B cell (primary cell): ENCODE measurements at regions of chr14 and their contacts with region 1.

Region 1: DNA sequence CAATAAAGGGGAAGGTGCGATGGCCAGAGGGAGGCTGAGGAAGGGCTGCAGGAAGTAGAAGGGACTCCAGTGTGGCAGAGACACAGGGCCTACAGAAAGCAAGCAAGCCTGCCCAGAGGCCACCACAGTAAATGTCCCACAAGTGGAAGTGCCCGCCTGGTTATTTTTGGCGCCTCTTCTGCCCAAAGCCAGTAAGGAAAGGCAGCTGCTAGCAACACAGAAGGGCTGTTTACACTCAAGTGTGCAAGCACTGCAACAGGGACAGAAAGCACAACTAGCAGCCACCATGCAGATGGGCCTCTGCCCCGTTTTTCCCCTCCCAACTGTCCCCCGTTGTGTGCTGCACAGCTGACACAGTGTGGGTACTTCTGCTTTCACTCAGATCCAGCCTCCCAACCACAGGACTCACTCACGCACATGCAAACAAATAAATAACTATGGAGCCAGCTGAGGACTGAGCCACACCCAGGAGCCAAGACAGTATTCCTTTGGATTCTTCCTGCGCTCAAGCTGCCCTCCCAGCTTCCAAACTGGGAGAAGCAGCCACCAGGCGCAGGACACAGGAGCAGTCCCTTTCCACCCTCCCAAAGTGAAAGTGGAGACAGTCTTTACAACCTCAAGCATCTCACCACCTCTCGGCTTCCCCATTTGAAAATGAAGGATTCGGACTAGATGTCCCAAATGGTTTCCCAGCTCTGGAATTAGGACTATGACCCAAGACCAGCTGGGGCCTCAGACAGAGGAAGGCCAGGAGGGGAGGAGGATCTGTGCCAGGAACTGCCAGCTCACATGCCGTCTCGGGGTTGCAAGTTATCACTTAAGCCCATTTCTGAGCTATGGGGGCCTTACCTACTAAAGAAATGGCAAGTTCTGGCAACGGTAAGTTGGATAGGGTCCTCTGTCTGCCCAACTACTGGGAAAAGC is 40.0 kb upstream of the PNMA1 start:
- DNase-seq: peak; percentile 89
- ATAC-seq: peak; percentile 56
- H3K4me3 ChIP-seq: peak overlapping the region; percentile 36 to 68 (median 48)
- H3K4me3 Mint-ChIP-seq: peak overlapping the region; percentile 88
- H3K27ac ChIP-seq: peak overlapping the region; percentile 86 to 90
- H3K27ac Mint-ChIP-seq: peak overlapping the region; percentile 94
- H3K4me1 ChIP-seq: peaks cover 86 to 94% of the 10 kb centered on the region in 2 donors
- H3K4me1 Mint-ChIP-seq: peaks cover 93% of the 10 kb centered on the region
- H3K27me3 ChIP-seq: no peaks in the 10 kb centered on the region
- H3K27me3 Mint-ChIP-seq: no peaks in the 10 kb centered on the region
- CTCF ChIP-seq: no peak

Region 2: DNA sequence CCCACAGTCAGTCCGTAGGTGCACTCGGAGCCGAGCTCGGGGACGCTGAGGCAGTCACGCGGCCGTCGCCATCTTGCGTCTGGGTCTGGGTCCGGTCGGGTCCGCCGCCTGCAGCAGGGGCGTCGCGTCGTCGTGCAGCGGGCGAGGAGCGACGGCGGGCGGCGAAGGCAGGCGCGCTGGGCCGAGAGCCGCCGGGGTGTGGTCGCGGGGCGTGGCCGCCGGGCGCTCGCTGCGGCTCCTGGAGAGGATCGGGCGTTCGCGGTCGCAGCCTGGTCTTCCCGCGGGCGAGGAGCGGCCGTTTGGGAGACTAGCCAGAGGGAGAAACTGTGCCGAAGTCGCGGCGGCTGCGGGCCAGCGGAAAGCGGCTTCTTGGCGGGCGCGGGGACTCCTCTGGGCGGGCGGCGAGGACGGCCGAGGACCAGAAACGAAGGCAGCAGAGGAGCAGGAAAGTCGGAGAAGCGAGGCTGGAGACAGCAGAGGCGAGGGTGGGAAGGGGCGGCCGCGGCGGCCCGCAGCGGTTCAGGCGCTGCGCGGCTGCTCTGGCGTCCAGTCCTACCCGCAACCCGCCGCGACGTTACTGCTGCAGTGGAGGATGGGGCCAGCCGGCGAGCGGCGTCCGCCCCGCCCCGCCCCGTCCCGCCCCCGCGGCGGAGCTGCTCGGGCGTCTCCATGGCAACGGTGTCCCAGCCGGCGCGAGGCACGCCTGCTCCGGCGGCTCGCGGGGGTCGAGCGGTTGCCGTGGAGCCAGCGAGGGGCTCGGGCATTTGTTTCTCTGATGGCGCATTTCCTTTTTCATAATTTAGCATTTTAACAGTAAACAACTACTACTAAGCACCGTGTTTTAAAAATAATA is 40.2 kb before region 1 on chr14 and contains the start of gene PNMA1:
- CTCF ChIA-PET with region 1: no interaction called
- POLR2A ChIA-PET with region 1: interaction called, 4 read pairs
- intact Hi-C with region 1: loop called (anchors 5 kb)
- DNase-seq: peak; percentile 92
- ATAC-seq: peak; percentile 81
- H3K4me3 ChIP-seq: peak within 1 kb of the TSS; percentile 54 to 85 (median 77)
- H3K4me3 Mint-ChIP-seq: peak within 1 kb of the TSS; percentile 92
- H3K27ac ChIP-seq: peak within 1 kb of the TSS; percentile 39 to 81
- H3K27ac Mint-ChIP-seq: peak within 1 kb of the TSS; percentile 98
- H3K4me1 ChIP-seq: peaks cover 17 to 22% of the 10 kb centered on the region in 2 donors
- H3K4me1 Mint-ChIP-seq: peaks cover 21% of the 10 kb centered on the region
- H3K27me3 ChIP-seq: no peaks in the 10 kb centered on the region
- H3K27me3 Mint-ChIP-seq: no peaks in the 10 kb centered on the region
- CTCF ChIP-seq: no peak
- total RNA-seq, gene PNMA1: 29.6 and 31.6 TPM in 2 replicates

Region 3: DNA sequence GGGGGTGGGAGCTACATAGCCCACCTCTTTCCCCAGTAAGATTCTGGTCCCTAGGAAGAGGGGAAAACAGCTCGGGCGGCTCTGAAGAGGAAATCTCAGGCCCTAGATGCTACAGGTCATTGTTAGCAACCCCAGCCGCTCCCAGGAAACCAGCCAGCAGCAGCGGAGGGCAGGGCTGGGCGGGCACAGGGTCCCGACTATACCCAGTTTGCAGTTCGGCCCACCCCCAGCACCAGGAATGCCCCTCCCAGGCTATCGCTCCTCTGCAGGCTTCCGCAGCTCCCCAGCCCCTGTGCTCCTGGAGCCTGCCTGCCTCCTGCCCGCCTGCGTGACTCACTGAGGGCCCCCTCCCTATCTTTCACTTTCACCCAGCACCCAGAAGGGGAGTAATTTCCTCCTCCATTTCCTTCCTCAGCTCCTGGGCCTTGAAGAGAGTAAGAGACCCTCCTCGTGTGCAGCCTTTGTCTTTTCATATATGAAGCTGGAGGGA is 12.8 kb before region 1 on chr14:
- CTCF ChIA-PET with region 1: interaction called, 107 read pairs
- POLR2A ChIA-PET with region 1: interaction called, 10 read pairs
- intact Hi-C with region 1: loop called (anchors 1 kb)
- DNase-seq: peak; percentile 73
- ATAC-seq: peak; percentile 77
- H3K4me3 ChIP-seq: peak overlapping the region; percentile 10 to 55 (median 43)
- H3K4me3 Mint-ChIP-seq: peak overlapping the region; percentile 94
- H3K27ac ChIP-seq: peak overlapping the region; percentile 61 to 81
- H3K27ac Mint-ChIP-seq: peak overlapping the region; percentile 99
- H3K4me1 ChIP-seq: peaks cover 63 to 71% of the 10 kb centered on the region in 2 donors
- H3K4me1 Mint-ChIP-seq: peaks cover 74% of the 10 kb centered on the region
- H3K27me3 ChIP-seq: no peaks in the 10 kb centered on the region
- H3K27me3 Mint-ChIP-seq: no peaks in the 10 kb centered on the region
- CTCF ChIP-seq: no peak

Region 4: DNA sequence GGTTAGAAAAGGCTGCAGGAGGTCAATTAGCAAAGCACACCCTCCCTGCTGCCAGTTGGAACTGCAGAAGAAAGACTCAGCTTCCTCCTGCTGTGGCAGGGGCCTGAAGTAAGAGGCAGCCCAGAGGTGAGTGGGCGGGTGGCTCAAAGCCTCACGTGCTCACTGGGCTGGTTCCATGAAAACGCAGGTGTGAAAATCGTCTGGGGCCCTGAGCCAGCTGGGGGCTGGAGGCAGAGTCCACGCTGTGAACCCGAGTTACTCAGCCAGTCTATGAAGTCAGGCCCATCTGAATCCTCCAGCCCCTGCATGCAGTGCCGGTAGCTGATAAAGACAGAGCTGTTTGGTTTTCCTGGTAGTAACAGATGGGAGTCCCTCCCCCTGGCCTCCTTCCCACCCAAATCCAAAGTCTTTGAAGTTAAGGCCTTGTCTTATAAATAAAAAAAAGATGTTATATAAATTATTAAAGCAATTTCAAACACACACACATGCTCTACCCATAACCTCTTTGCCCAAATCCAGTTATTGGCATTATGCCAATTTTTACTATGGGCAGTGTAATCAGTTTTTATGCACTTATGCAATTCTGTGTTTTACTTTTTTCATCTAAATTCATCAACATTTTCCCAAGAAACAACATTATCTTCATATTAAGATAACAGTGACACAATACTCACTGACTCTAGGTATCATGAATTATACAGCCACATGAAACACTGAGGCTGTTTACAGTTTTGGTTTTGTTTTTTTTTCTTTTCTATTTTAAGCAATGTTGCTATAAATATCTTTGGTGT is 17.8 kb after region 1 on chr14:
- CTCF ChIA-PET with region 1: interaction called, 220 read pairs
- POLR2A ChIA-PET with region 1: interaction called, 183 read pairs
- intact Hi-C with region 1: loop called (anchors 1 kb)
- DNase-seq: peak; percentile 89
- ATAC-seq: peak; percentile 61
- H3K4me3 ChIP-seq: peak overlapping the region in 3 of 5 experiments; percentile 5 to 52 (median 10)
- H3K4me3 Mint-ChIP-seq: peak overlapping the region; percentile 87
- H3K27ac ChIP-seq: peak overlapping the region; percentile 96 to 97
- H3K27ac Mint-ChIP-seq: peak overlapping the region; percentile 99
- H3K4me1 ChIP-seq: peaks cover 83 to 96% of the 10 kb centered on the region in 2 donors
- H3K4me1 Mint-ChIP-seq: peaks cover 76% of the 10 kb centered on the region
- H3K27me3 ChIP-seq: no peaks in the 10 kb centered on the region
- H3K27me3 Mint-ChIP-seq: no peaks in the 10 kb centered on the region
- CTCF ChIP-seq: no peak

Region 5: GRCh38 chr14:73777401-73777800 is 23.2 kb after region 1 on chr14:
- CTCF ChIA-PET with region 1: interaction called, 220 read pairs
- POLR2A ChIA-PET with region 1: interaction called, 183 read pairs
- intact Hi-C with region 1: loop called (anchors 1 kb)
- DNase-seq: peak; percentile 67
- ATAC-seq: peak; percentile 84
- H3K4me3 ChIP-seq: no peak overlapping the region
- H3K4me3 Mint-ChIP-seq: peak overlapping the region; percentile 18
- H3K27ac ChIP-seq: peak overlapping the region in 1 of 2 donors; percentile 35
- H3K27ac Mint-ChIP-seq: peak overlapping the region; percentile 80
- H3K4me1 ChIP-seq: peaks cover 60 to 67% of the 10 kb centered on the region in 2 donors
- H3K4me1 Mint-ChIP-seq: peaks cover 65% of the 10 kb centered on the region
- H3K27me3 ChIP-seq: no peaks in the 10 kb centered on the region
- H3K27me3 Mint-ChIP-seq: no peaks in the 10 kb centered on the region
- CTCF ChIP-seq: peak; percentile 47

Region 6: GRCh38 chr14:73825551-73826188 is 71.4 kb after region 1 on chr14:
- CTCF ChIA-PET with region 1: interaction called, 51 read pairs
- POLR2A ChIA-PET with region 1: interaction called, 3 read pairs
- intact Hi-C with region 1: no loop called
- DNase-seq: peak; percentile 81
- ATAC-seq: peak; percentile 99
- H3K4me3 ChIP-seq: no peak overlapping the region
- H3K4me3 Mint-ChIP-seq: no peak overlapping the region
- H3K27ac ChIP-seq: no peak overlapping the region
- H3K27ac Mint-ChIP-seq: no peak overlapping the region
- H3K4me1 ChIP-seq: no peaks in the 10 kb centered on the region
- H3K4me1 Mint-ChIP-seq: peaks cover 4% of the 10 kb centered on the region
- H3K27me3 ChIP-seq: no peaks in the 10 kb centered on the region
- H3K27me3 Mint-ChIP-seq: no peaks in the 10 kb centered on the region
- CTCF ChIP-seq: peak; percentile 93

Region 7: DNA sequence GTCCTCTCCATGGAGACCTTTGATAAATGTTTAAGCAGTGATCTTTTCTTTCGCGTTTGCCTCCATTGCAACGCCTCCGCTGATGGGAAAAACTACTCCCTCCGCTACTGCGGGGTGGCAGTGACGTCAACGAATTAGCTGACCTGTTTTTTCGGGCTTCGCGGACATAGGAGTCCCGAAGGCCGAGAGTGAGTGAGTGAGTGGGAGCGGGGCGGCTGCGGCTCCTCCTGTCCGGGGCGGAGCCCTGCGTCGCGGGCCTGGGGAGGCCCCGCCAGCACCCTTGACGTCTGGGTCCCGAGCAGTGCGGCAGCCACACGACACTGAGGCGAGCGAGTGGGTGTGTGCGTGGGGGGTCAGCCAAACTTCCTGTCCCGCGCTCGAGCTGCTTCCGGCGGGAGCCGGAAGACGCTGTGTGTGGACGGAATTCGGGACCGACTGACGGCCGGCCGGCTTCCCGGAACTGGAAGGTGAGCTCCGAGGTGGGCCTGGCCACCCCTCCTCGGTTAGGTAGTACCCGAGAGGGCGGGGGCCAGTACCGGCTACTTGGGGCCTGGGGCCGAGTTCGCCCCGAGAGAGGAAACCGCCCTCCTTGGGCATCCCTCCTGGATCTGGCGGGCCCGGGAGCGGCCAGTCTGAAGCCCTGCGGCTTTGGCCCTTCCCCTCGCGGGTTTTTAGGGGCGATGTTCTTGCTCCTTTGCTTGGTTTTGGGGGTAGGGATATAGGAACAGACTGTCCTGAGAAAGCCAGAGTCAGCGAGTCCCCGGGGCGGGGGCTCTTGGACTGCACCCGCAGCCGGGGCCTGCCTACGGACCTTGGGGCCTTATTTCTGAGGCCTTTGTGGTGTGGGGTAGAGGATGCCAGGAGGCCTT is 132.5 kb after region 1 on chr14 and contains the start of gene ZNF410:
- CTCF ChIA-PET with region 1: interaction called, 3 read pairs
- POLR2A ChIA-PET with region 1: no interaction called
- intact Hi-C with region 1: loop called (anchors 5 kb)
- DNase-seq: peak; percentile 93
- ATAC-seq: peak; percentile 99
- H3K4me3 ChIP-seq: peak within 1 kb of the TSS; percentile 64 to 97 (median 94)
- H3K4me3 Mint-ChIP-seq: peak within 1 kb of the TSS; percentile 99
- H3K27ac ChIP-seq: peak within 1 kb of the TSS; percentile 94 to 96
- H3K27ac Mint-ChIP-seq: peak within 1 kb of the TSS; percentile 98
- H3K4me1 ChIP-seq: peaks cover 18 to 20% of the 10 kb centered on the region in 2 donors
- H3K4me1 Mint-ChIP-seq: peaks cover 41% of the 10 kb centered on the region
- H3K27me3 ChIP-seq: no peaks in the 10 kb centered on the region
- H3K27me3 Mint-ChIP-seq: no peaks in the 10 kb centered on the region
- CTCF ChIP-seq: no peak
- total RNA-seq, gene ZNF410: 58.3 and 69.0 TPM in 2 replicates